ENCODE measurements at regions of chr7 and their contacts with region 1.

Region 1: DNA sequence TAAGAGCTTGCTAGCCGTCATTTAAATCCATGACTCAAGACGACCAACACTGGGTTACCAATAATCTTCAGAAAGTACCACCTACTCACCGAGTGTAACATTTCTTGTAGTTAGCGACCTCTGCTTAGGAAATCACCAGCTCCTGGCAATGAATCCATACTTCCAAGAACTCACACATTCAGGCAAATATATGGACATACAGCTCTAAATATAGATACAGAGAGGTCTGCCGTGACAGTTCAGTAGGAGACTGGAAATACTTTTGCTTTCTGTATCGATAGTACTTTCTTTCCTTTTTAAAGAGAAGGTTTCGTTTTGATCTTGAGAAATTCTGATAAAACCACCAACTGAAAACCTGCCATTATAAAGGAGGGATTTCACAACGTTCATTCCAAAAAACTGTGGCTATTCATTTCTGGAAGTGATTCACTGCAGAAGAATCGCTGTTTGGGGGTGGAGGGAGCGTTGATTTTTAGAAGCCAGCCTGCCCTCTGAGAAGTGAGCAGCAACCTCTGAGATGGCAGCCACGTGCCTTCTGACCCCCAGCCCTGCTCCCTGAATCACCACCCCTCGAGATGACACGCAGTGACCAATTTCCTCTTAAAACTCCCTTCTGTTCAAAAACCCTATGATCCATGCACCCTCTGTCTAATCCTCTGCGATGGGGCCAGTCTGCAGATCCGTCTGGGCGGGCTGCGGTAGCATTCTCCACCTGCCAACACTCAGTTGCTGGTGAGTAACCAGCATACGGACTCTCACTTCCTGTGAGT is 179.0 kb upstream of the KLF14 start:
- DNase-seq: peak; percentile 76 to 92
- ATAC-seq: peak; percentile 79 to 92 (median 90)
- H3K4me3 ChIP-seq: peak overlapping the region; percentile 59
- H3K4me3 Mint-ChIP-seq: peak overlapping the region; percentile 92
- H3K27ac ChIP-seq: peak overlapping the region; percentile 97
- H3K27ac Mint-ChIP-seq: peak overlapping the region; percentile 92 to 93
- H3K4me1 ChIP-seq: peaks cover 52% of the 10 kb centered on the region
- H3K4me1 Mint-ChIP-seq: peaks cover 82 to 83% of the 10 kb centered on the region in 2 donors
- H3K27me3 ChIP-seq: no peaks in the 10 kb centered on the region
- H3K27me3 Mint-ChIP-seq: no peaks in the 10 kb centered on the region
- CTCF ChIP-seq: no peak

Region 2: GRCh38 chr7:130926001-130926691 is 13.1 kb after region 1 on chr7:
- intact Hi-C with region 1: loop called (anchors 2 kb)
- DNase-seq: peak; percentile 42 to 81
- ATAC-seq: peak; percentile 87 to 91 (median 90)
- H3K4me3 ChIP-seq: no peak overlapping the region
- H3K4me3 Mint-ChIP-seq: peak overlapping the region; percentile 48
- H3K27ac ChIP-seq: peak overlapping the region; percentile 64
- H3K27ac Mint-ChIP-seq: peak overlapping the region; percentile 68 to 94
- H3K4me1 ChIP-seq: peaks cover 34% of the 10 kb centered on the region
- H3K4me1 Mint-ChIP-seq: peaks cover 57 to 58% of the 10 kb centered on the region in 2 donors
- H3K27me3 ChIP-seq: no peaks in the 10 kb centered on the region
- H3K27me3 Mint-ChIP-seq: no peaks in the 10 kb centered on the region
- CTCF ChIP-seq: no peak

Region 3: GRCh38 chr7:130941322-130942210 is 28.5 kb after region 1 on chr7:
- intact Hi-C with region 1: loop called (anchors 2 kb)
- DNase-seq: peak in 1 of 2 donors; percentile 73
- ATAC-seq: peak in 2 of 3 donors; percentile 19 to 47
- H3K4me3 ChIP-seq: peak overlapping the region; percentile 35
- H3K4me3 Mint-ChIP-seq: peak overlapping the region; percentile 94
- H3K27ac ChIP-seq: peak overlapping the region; percentile 77
- H3K27ac Mint-ChIP-seq: peak overlapping the region; percentile 89 to 97
- H3K4me1 ChIP-seq: peaks cover 18% of the 10 kb centered on the region
- H3K4me1 Mint-ChIP-seq: peaks cover 80 to 85% of the 10 kb centered on the region in 2 donors
- H3K27me3 ChIP-seq: no peaks in the 10 kb centered on the region
- H3K27me3 Mint-ChIP-seq: no peaks in the 10 kb centered on the region
- CTCF ChIP-seq: no peak

Region 4: GRCh38 chr7:130961128-130961601 is 48.1 kb after region 1 on chr7:
- intact Hi-C with region 1: loop called (anchors 1 kb)
- DNase-seq: peak; percentile 39 to 93
- ATAC-seq: peak; percentile 77 to 87 (median 83)
- H3K4me3 ChIP-seq: peak overlapping the region; percentile 11
- H3K4me3 Mint-ChIP-seq: peak overlapping the region; percentile 83
- H3K27ac ChIP-seq: peak overlapping the region; percentile 79
- H3K27ac Mint-ChIP-seq: peak overlapping the region; percentile 84 to 85
- H3K4me1 ChIP-seq: peaks cover 43% of the 10 kb centered on the region
- H3K4me1 Mint-ChIP-seq: peaks cover 62 to 68% of the 10 kb centered on the region in 2 donors
- H3K27me3 ChIP-seq: no peaks in the 10 kb centered on the region
- H3K27me3 Mint-ChIP-seq: no peaks in the 10 kb centered on the region
- CTCF ChIP-seq: no peak

Region 5: DNA sequence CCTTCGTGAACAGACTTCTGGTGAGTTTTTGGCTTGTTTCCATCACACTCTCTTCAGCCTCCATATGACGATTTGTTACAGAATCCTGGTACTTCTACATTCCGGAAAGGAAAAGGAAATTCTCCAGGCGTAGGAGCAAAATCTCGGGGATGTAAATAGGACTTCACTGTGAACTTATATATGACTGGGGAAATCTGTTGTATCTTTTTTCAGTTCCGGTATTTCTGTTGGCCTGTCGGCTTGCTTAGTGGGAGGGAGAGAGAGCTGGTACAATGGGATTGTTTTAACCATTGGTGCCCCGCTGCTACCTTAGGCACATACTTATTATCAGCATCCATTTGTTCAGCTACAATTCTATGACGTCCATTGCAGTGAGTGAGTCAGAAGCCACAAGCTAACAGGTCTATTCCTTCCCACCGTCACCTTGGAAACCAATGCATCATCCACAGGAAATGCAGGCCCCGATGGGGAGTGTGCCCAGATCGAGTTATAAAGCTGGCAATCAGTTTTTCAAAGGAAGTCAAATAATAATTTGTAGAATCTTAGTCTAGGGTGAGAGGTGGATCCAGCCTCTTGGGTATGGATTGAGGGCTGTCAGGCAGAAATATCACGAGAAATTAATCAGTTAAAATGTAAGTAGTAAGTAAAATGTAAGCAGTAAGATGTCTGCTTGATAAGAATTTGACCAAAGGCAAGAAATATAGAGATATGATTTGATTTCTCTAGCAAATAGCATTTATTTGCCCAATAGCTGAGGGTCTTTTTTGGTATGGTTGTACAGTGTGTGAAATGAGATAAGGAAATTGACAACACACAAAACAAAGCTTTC is 322.7 kb after region 1 on chr7:
- intact Hi-C with region 1: loop called (anchors 5 kb)
- DNase-seq: peak; percentile 64 to 90
- ATAC-seq: peak; percentile 63 to 81 (median 77)
- H3K4me3 ChIP-seq: no peak overlapping the region
- H3K4me3 Mint-ChIP-seq: peak overlapping the region; percentile 65
- H3K27ac ChIP-seq: peak overlapping the region; percentile 59
- H3K27ac Mint-ChIP-seq: peak overlapping the region; percentile 91 to 97
- H3K4me1 ChIP-seq: peaks cover 26% of the 10 kb centered on the region
- H3K4me1 Mint-ChIP-seq: peaks cover 53 to 57% of the 10 kb centered on the region in 2 donors
- H3K27me3 ChIP-seq: no peaks in the 10 kb centered on the region
- H3K27me3 Mint-ChIP-seq: no peaks in the 10 kb centered on the region
- CTCF ChIP-seq: no peak

Region 6: DNA sequence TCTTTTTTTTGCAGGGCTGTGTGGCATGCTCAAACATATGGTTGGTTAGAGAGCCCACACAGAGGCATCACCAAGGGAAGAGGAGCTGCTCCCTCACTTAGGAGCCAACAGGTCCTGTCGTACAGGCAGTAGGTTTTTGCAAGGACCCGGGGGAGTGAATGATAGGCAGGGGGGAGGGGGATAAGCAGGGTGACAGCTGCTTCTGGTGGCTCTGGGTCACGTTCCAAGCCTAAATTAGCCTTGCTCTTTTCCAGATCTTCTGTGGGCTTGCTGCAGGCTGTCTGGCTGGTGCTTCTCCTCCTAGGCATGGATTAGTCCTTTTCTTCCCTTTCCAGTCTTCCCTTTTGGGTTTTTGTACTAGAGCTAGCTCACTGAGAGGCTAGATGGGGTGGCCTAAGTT is 761.1 kb after region 1 on chr7:
- intact Hi-C with region 1: no loop called
- DNase-seq: no peak
- ATAC-seq: no peak
- H3K4me3 ChIP-seq: no peak overlapping the region
- H3K4me3 Mint-ChIP-seq: no peak overlapping the region
- H3K27ac ChIP-seq: no peak overlapping the region
- H3K27ac Mint-ChIP-seq: no peak overlapping the region
- H3K4me1 ChIP-seq: no peaks in the 10 kb centered on the region
- H3K4me1 Mint-ChIP-seq: no peaks in the 10 kb centered on the region
- H3K27me3 ChIP-seq: no peaks in the 10 kb centered on the region
- H3K27me3 Mint-ChIP-seq: peaks cover 13 to 56% of the 10 kb centered on the region in 2 donors
- CTCF ChIP-seq: no peak

Measured in natural killer cell (primary cell).